ENCODE measurements at regions of chr15 and their contacts with region 1.

Region 1: GRCh38 chr15:74835307-74835823 is 7.6 kb downstream of the ULK3 start:
- DNase-seq: peak; percentile 68 to 87 (median 80)
- ATAC-seq: peak; percentile 84
- H3K4me3 ChIP-seq: no peak overlapping the region
- H3K27ac ChIP-seq: no peak overlapping the region
- H3K4me1 ChIP-seq: peaks cover 0 to 30% of the 10 kb centered on the region in 2 experiments; a peak in 2 of 5 replicates
- H3K27me3 ChIP-seq: peaks cover 0 to 10% of the 10 kb centered on the region in 2 experiments; a peak in 1 of 5 replicates
- CTCF ChIP-seq: peak; percentile 82 to 95 (median 87)
- EP300 ChIP-seq: no peak
- POLR2A ChIP-seq: no peak
- RAD21 ChIP-seq: peak; percentile 41 to 68; a peak in 3 of 4 replicates

Region 2: DNA sequence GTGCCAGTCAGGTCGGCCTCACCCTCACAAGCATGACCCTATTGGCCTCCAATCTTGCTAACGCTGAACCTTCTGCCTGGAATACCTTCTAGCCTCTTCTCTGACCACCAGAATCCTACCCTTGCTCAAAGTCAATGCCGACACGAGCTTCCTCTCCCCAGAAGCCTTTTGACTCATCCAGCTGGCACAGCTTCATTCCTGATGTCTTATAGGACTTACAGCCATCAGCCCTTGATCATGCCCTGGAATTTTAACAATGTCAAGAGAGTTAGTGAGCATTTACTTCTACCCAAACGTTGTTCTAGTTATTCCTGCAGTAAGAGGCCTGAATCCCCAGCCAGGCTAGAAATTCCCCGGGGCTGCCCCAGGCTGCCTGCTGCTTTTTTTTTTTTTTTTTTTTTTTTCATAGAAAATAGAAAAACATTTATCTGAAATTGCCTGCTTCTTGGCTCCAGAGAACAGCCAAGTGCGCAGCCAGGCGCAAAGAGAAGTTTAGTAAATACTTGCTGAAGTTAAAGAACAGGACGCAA is 82.8 kb before region 1 on chr15:
- CTCF ChIA-PET with region 1: no interaction called
- POLR2A ChIA-PET with region 1: no interaction called
- in situ Hi-C with region 1: no loop called
- intact Hi-C with region 1: no loop called
- DNase-seq: no peak
- ATAC-seq: no peak
- H3K4me3 ChIP-seq: no peak overlapping the region
- H3K27ac ChIP-seq: no peak overlapping the region
- H3K4me1 ChIP-seq: no peaks in the 10 kb centered on the region
- H3K27me3 ChIP-seq: peaks cover 35 to 81% of the 10 kb centered on the region in 2 experiments
- CTCF ChIP-seq: no peak
- EP300 ChIP-seq: no peak
- POLR2A ChIP-seq: no peak
- RAD21 ChIP-seq: no peak

Region 3: DNA sequence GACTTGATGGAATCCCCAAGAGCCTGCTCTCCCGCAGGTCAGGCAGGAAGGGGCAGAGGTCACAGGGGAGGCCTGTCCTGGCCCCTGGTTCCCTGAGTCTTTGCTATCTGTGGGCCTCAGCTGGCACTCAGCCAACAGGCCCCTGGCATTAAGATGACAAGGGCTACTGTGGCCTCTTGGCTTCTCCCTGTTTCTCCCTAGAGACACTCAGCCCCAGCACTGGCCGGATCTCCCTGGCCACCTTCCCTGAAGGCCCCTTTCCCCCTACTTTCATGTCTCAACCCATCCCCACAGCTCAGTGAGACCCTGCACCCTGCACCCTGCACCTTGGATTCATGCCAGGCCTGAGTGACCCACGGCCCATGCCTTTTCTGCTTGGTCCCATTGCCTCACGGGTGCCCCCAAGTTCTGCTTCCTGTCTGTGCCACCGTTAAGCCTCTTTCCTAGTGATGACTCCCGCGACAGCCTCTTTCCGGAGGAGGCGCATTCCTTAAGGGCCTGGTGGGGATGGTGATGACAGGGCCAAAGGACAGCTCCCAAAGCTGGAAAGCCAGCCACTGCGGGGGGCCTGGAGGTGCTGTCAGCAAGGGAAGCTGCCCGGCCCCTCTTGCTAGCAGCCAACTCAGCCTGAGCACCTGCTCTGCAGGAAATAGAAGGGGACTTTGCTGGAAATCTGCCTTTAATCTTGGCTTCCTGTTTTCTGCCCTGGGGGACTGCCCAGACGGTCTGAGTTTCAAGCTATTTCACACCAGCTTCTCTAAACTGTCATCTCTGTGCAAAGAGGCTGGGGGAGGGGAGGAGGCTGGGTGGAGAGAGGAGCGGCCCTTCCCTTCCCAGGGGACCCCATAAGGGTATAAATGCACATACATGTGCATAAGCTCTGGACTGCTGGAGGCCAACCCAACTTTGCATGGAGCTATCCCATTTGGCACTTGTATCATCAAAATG is 58.3 kb before region 1 on chr15:
- CTCF ChIA-PET with region 1: interaction called, 7 read pairs
- POLR2A ChIA-PET with region 1: interaction called, 3 read pairs
- in situ Hi-C with region 1: no loop called
- intact Hi-C with region 1: loop called (anchors 5 kb)
- DNase-seq: no peak
- ATAC-seq: no peak; the same call in 2 of the 3 replicates
- H3K4me3 ChIP-seq: no peak overlapping the region
- H3K27ac ChIP-seq: no peak overlapping the region
- H3K4me1 ChIP-seq: peaks cover 32 to 43% of the 10 kb centered on the region in 2 experiments
- H3K27me3 ChIP-seq: no peaks in the 10 kb centered on the region
- CTCF ChIP-seq: no peak
- EP300 ChIP-seq: peak; percentile 27; the same call in 1 of the 2 replicates
- POLR2A ChIP-seq: no peak
- RAD21 ChIP-seq: no peak

Measured in K562 (cell line).